CD8-positive, alpha-beta T cell (primary cell): ENCODE measurements at regions of chr3 and their contacts with region 1.

Region 1: GRCh38 chr3:115783938-115784738 is 160.8 kb downstream of the GAP43 start:
- DNase-seq: peak; percentile 85 to 96 (median 92)
- ATAC-seq: peak; percentile 79
- H3K4me3 ChIP-seq: peak overlapping the region; percentile 67 to 72
- H3K4me3 Mint-ChIP-seq: peak overlapping the region; percentile 79
- H3K27ac ChIP-seq: peak overlapping the region; percentile 95
- H3K27ac Mint-ChIP-seq: peak overlapping the region; percentile 97
- H3K4me1 ChIP-seq: peaks cover 8% of the 10 kb centered on the region
- H3K4me1 Mint-ChIP-seq: peaks cover 15% of the 10 kb centered on the region
- H3K27me3 ChIP-seq: peaks cover 0 to 2% of the 10 kb centered on the region in 2 experiments
- H3K27me3 Mint-ChIP-seq: no peaks in the 10 kb centered on the region
- CTCF ChIP-seq: peak; percentile 98

Region 2: GRCh38 chr3:114213627-114214541 is 1570.3 kb before region 1 on chr3:
- CTCF ChIA-PET with region 1: no interaction called
- POLR2A ChIA-PET with region 1: interaction called, 4 read pairs
- intact Hi-C with region 1: loop called (anchors 10 kb)
- DNase-seq: peak; percentile 35 to 92 (median 74)
- ATAC-seq: peak; percentile 45
- H3K4me3 ChIP-seq: peak overlapping the region; percentile 55
- H3K4me3 Mint-ChIP-seq: no peak overlapping the region
- H3K27ac ChIP-seq: peak overlapping the region; percentile 91 to 96
- H3K27ac Mint-ChIP-seq: no peak overlapping the region
- H3K4me1 ChIP-seq: peaks cover 60% of the 10 kb centered on the region
- H3K4me1 Mint-ChIP-seq: peaks cover 3% of the 10 kb centered on the region
- H3K27me3 ChIP-seq: no peaks in the 10 kb centered on the region
- H3K27me3 Mint-ChIP-seq: no peaks in the 10 kb centered on the region
- CTCF ChIP-seq: peak; percentile 38

Region 3: DNA sequence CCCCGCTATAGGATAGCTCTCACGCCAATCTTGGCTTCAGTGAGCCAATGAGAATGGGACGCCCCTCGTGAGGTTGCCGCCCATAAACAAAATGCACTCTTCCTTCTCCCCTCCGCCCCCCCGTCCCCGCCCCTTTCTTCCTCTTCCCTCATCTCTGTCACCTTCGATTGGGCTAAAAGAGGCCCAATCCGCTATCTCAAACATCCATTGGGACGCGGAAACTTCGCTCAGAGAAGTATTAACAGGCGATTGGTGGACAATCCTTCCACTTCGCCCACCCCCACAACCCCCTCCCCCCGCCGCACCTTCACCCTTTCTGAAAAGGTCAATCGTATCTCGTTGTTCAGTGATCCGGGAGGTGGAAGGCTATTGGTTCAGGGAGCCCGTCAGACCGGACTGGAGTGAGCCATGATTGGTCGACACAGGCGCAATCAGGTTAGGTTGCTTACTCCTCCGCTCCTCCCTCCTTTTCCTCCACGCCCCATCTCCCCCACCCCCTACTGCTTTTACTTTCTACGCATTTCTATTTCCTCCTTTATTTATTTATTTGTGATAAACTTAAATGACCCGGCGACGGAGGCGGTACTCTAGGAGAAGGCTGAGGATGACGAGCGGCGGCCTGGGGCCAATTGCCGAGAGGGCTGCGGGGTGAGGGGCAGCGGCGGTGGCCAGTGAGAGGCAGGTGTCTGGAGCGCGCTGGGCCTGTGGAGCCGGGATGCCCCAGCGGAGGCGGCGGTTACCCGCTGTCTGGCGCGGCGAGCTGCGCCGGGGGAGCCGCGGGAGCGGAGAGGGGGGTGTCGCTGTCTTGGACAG is 636.6 kb before region 1 on chr3:
- CTCF ChIA-PET with region 1: interaction called, 3 read pairs
- POLR2A ChIA-PET with region 1: interaction called, 6 read pairs
- intact Hi-C with region 1: loop called (anchors 1 to 2 kb)
- DNase-seq: peak; percentile 92 to 100 (median 96)
- ATAC-seq: peak; percentile 71
- H3K4me3 ChIP-seq: peak overlapping the region; percentile 80 to 85
- H3K4me3 Mint-ChIP-seq: peak overlapping the region; percentile 88
- H3K27ac ChIP-seq: peak overlapping the region; percentile 96 to 97
- H3K27ac Mint-ChIP-seq: peak overlapping the region; percentile 100
- H3K4me1 ChIP-seq: peaks cover 15% of the 10 kb centered on the region
- H3K4me1 Mint-ChIP-seq: peaks cover 39% of the 10 kb centered on the region
- H3K27me3 ChIP-seq: no peaks in the 10 kb centered on the region
- H3K27me3 Mint-ChIP-seq: no peaks in the 10 kb centered on the region
- CTCF ChIP-seq: no peak

Region 4: GRCh38 chr3:115658337-115659181 is 125.6 kb before region 1 on chr3:
- CTCF ChIA-PET with region 1: no interaction called
- POLR2A ChIA-PET with region 1: interaction called, 4 read pairs
- intact Hi-C with region 1: loop called (anchors 1 to 2 kb)
- DNase-seq: peak; percentile 46 to 85 (median 78)
- ATAC-seq: peak; percentile 92
- H3K4me3 ChIP-seq: peak overlapping the region; percentile 83 to 84
- H3K4me3 Mint-ChIP-seq: peak overlapping the region; percentile 91
- H3K27ac ChIP-seq: peak overlapping the region; percentile 63 to 90
- H3K27ac Mint-ChIP-seq: peak overlapping the region; percentile 98
- H3K4me1 ChIP-seq: peaks cover 17% of the 10 kb centered on the region
- H3K4me1 Mint-ChIP-seq: peaks cover 25% of the 10 kb centered on the region
- H3K27me3 ChIP-seq: no peaks in the 10 kb centered on the region
- H3K27me3 Mint-ChIP-seq: no peaks in the 10 kb centered on the region
- CTCF ChIP-seq: no peak

Region 5: GRCh38 chr3:115814778-115815380 is 30.7 kb after region 1 on chr3:
- CTCF ChIA-PET with region 1: interaction called, 13 read pairs
- POLR2A ChIA-PET with region 1: interaction called, 4 read pairs
- intact Hi-C with region 1: loop called (anchors 1 to 2 kb)
- DNase-seq: peak; percentile 38 to 78 (median 70)
- ATAC-seq: peak; percentile 66
- H3K4me3 ChIP-seq: no peak overlapping the region
- H3K4me3 Mint-ChIP-seq: no peak overlapping the region
- H3K27ac ChIP-seq: no peak overlapping the region
- H3K27ac Mint-ChIP-seq: no peak overlapping the region
- H3K4me1 ChIP-seq: no peaks in the 10 kb centered on the region
- H3K4me1 Mint-ChIP-seq: no peaks in the 10 kb centered on the region
- H3K27me3 ChIP-seq: no peaks in the 10 kb centered on the region
- H3K27me3 Mint-ChIP-seq: peaks cover 10% of the 10 kb centered on the region
- CTCF ChIP-seq: peak; percentile 100